ENCODE measurements at regions of chr11 and their contacts with region 1.

Region 1: GRCh38 chr11:117426269-117426685 is 98.6 kb downstream of the CEP164 start:
- DNase-seq: peak; percentile 66 to 74
- H3K4me3 ChIP-seq: no peak overlapping the region
- H3K27ac ChIP-seq: no peak overlapping the region
- H3K4me1 ChIP-seq: no peaks in the 10 kb centered on the region
- H3K27me3 ChIP-seq: no peaks in the 10 kb centered on the region
- CTCF ChIP-seq: peak; percentile 84 to 95 (median 87)
- POLR2A ChIP-seq: no peak

Region 2: GRCh38 chr11:117378976-117379865 is 47.1 kb before region 1 on chr11:
- intact Hi-C with region 1: no loop called
- DNase-seq: no peak
- H3K4me3 ChIP-seq: no peak overlapping the region
- H3K27ac ChIP-seq: no peak overlapping the region
- H3K4me1 ChIP-seq: no peaks in the 10 kb centered on the region
- H3K27me3 ChIP-seq: no peaks in the 10 kb centered on the region
- CTCF ChIP-seq: no peak
- POLR2A ChIP-seq: no peak

Region 3: GRCh38 chr11:117817368-117818040 is 391.2 kb after region 1 on chr11:
- intact Hi-C with region 1: loop called (anchors 10 kb)
- DNase-seq: peak; percentile 84 to 91
- H3K4me3 ChIP-seq: peak overlapping the region in 1 of 2 donors; percentile 18
- H3K27ac ChIP-seq: peak overlapping the region; percentile 63 to 73
- H3K4me1 ChIP-seq: peaks cover 0 to 6% of the 10 kb centered on the region in 2 donors
- H3K27me3 ChIP-seq: no peaks in the 10 kb centered on the region
- CTCF ChIP-seq: peak; percentile 96 to 100 (median 99)
- POLR2A ChIP-seq: no peak

Measured in uterus (tissue), 4 donors.